A549 (cell line): ENCODE measurements at regions of chr2 and their contacts with region 1.

Region 1: DNA sequence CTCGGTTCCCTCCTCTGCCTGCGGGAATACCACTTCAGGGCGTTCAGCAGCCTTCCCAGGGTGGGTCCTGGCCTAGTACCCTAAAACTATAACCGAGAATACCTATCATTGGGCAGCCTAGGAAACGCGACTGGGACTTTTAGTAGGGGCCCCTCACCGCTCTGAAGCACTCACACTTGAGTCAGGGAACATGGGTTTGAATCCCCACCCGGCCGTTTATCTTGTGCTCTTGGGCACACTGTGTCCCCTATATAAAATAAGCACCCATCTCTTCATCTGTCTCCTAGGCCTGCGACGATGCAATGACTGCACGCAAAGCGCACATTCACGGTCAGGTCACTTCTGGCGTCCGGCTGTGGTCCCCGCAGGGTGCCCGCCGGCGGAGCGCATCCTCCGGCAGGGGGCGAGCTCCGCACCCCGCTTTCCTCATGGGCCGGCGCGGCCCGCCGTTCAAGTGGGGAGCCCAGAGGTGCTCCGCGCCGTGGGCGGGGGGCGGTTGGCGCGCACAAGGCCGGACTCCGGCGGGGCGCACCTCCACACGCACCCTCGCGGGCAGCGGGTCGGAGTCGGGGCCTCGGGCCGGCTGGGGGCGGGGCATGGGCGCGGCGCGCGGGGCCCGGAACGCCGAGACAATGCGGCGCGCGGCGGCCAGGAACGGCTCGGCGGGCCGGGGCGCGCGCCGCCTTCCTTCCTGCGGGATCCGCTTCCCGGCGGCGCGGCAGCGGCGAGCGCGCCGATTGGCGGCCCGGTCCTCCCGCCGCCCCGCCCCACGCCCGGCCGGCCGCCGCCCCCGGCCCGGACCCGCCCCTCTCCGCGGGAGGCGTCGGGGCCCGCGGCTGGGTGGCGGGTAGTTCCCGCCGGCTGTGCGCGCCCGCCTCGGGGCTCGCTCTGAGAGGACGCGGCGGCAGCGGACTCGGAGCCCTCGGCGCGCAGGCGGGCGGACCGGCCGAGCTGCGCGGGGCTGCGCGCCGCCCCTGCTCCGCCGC is at the start of gene ASAP2:
- DNase-seq: peak; percentile 76 to 90
- ATAC-seq: peak; percentile 76 to 80
- H3K4me3 ChIP-seq: peak within 1 kb of the TSS; percentile 93
- H3K27ac ChIP-seq: peak within 1 kb of the TSS; percentile 83 to 93
- H3K4me1 ChIP-seq: peaks cover 35% of the 10 kb centered on the region
- CTCF ChIP-seq: peak; percentile 97
- EP300 ChIP-seq: peak in 1 of 2 experiments; percentile 8; a peak in 2 of 5 replicates
- POLR2A ChIP-seq: peak; percentile 38; the same call in 1 of the 2 replicates
- RAD21 ChIP-seq: peak; percentile 65 to 89
- polyA plus RNA-seq, gene ASAP2: 27.9 TPM in 2 replicates

Region 2: GRCh38 chr2:8821276-8822217 is 384.7 kb before region 1 on chr2:
- CTCF ChIA-PET with region 1: no interaction called
- POLR2A ChIA-PET with region 1: no interaction called
- DNase-seq: no peak
- ATAC-seq: peak; percentile 55 to 59; a peak in 4 of 6 replicates
- H3K4me3 ChIP-seq: no peak overlapping the region
- H3K27ac ChIP-seq: no peak overlapping the region
- H3K4me1 ChIP-seq: peaks cover 16% of the 10 kb centered on the region; the same call in 2 of the 3 replicates
- CTCF ChIP-seq: no peak
- EP300 ChIP-seq: no peak
- POLR2A ChIP-seq: no peak
- RAD21 ChIP-seq: no peak

Region 3: GRCh38 chr2:9192712-9193111 is 13.5 kb before region 1 on chr2:
- CTCF ChIA-PET with region 1: interaction called, 14 read pairs
- POLR2A ChIA-PET with region 1: no interaction called
- DNase-seq: no peak
- ATAC-seq: no peak
- H3K4me3 ChIP-seq: no peak overlapping the region
- H3K27ac ChIP-seq: no peak overlapping the region
- H3K4me1 ChIP-seq: 0 out of 3 replicates have a peak, but pooled peaks cover 4% of the 10 kb centered on the region
- CTCF ChIP-seq: no peak
- EP300 ChIP-seq: no peak
- POLR2A ChIP-seq: no peak
- RAD21 ChIP-seq: no peak

Region 4: DNA sequence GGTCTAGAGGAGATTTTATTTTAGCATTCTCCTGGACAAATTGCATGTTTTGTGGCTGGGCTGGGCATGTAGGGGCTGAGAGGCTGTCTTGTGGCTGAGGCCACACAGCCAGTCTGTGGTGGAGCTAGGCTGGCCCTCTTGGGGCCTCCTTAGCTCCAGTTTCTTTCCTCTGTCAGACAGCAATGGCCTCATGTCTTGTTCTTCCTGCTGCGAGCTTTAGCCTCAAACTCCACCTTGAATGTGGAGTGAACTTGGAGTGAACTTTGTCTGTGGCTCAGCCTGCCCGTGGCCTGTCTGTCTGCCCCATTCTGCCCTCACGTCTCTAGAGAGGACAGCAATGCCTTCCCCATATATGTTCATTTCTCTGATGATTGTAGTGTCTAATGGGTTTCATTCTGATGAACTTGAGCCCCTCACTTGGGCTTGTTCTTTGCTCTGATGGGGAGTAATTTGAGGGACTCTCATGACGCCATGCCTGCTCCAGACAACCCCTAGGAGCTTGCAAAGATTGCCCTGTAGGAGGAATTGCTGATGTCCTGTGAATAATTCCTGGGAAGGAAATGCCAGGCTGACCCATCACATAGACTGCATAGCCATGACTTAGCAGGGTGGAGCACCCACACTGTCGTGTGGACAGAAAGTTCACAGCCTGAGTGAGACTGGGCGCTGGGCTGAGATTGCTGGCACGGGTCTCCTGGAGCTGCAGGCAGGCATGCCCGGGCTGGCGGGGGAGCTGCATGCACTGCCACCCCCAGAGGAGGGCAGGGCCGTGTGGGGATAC is 43.0 kb after region 1 on chr2:
- CTCF ChIA-PET with region 1: interaction called, 17 read pairs
- POLR2A ChIA-PET with region 1: interaction called, 7 read pairs
- DNase-seq: peak in 1 of 2 experiments; percentile 70
- ATAC-seq: peak; percentile 46 to 71
- H3K4me3 ChIP-seq: no peak overlapping the region
- H3K27ac ChIP-seq: peak overlapping the region; percentile 67 to 84
- H3K4me1 ChIP-seq: peaks cover 82% of the 10 kb centered on the region
- CTCF ChIP-seq: no peak
- EP300 ChIP-seq: no peak
- POLR2A ChIP-seq: no peak
- RAD21 ChIP-seq: no peak

Region 5: GRCh38 chr2:9326975-9327374 is 120.7 kb after region 1 on chr2:
- CTCF ChIA-PET with region 1: interaction called, 114 read pairs
- POLR2A ChIA-PET with region 1: no interaction called
- DNase-seq: peak in 1 of 2 experiments; percentile 36
- ATAC-seq: 0 out of 6 replicates have a peak, but pooled peaks of 1 of the 2 experiments have one; percentile 26
- H3K4me3 ChIP-seq: no peak overlapping the region
- H3K27ac ChIP-seq: peak overlapping the region; percentile 44 to 76; a peak in 5 of 6 replicates
- H3K4me1 ChIP-seq: peaks cover 19% of the 10 kb centered on the region
- CTCF ChIP-seq: no peak
- EP300 ChIP-seq: no peak
- POLR2A ChIP-seq: no peak
- RAD21 ChIP-seq: no peak

Region 6: GRCh38 chr2:9341337-9341887 is 135.2 kb after region 1 on chr2:
- CTCF ChIA-PET with region 1: interaction called, 114 read pairs
- POLR2A ChIA-PET with region 1: no interaction called
- DNase-seq: no peak
- ATAC-seq: no peak
- H3K4me3 ChIP-seq: no peak overlapping the region
- H3K27ac ChIP-seq: no peak overlapping the region
- H3K4me1 ChIP-seq: peaks cover 12% of the 10 kb centered on the region
- CTCF ChIP-seq: no peak
- EP300 ChIP-seq: no peak
- POLR2A ChIP-seq: no peak
- RAD21 ChIP-seq: no peak